ENCODE measurements at regions of chr17 and their contacts with region 1.

Region 1: GRCh38 chr17:20216154-20216815 is 207.1 kb downstream of the SPECC1 start:
- DNase-seq: no peak
- CTCF ChIP-seq: no peak

Region 2: GRCh38 chr17:19940722-19941464 is 275.4 kb before region 1 on chr17:
- CTCF ChIA-PET with region 1: no interaction called
- POLR2A ChIA-PET with region 1: no interaction called
- DNase-seq: no peak
- CTCF ChIP-seq: no peak

Region 3: GRCh38 chr17:20141198-20141972 is 74.9 kb before region 1 on chr17:
- CTCF ChIA-PET with region 1: no interaction called
- POLR2A ChIA-PET with region 1: no interaction called
- DNase-seq: no peak
- CTCF ChIP-seq: no peak

Region 4: GRCh38 chr17:20226814-20227482 is 10.7 kb after region 1 on chr17:
- CTCF ChIA-PET with region 1: interaction called, 15 read pairs
- POLR2A ChIA-PET with region 1: no interaction called
- DNase-seq: peak; percentile 68
- CTCF ChIP-seq: peak; percentile 81

Region 5: GRCh38 chr17:20241831-20242230 is 25.5 kb after region 1 on chr17:
- CTCF ChIA-PET with region 1: no interaction called
- POLR2A ChIA-PET with region 1: no interaction called
- DNase-seq: no peak
- CTCF ChIP-seq: no peak